ENCODE measurements at regions of chr1 and their contacts with region 1.

Region 1: DNA sequence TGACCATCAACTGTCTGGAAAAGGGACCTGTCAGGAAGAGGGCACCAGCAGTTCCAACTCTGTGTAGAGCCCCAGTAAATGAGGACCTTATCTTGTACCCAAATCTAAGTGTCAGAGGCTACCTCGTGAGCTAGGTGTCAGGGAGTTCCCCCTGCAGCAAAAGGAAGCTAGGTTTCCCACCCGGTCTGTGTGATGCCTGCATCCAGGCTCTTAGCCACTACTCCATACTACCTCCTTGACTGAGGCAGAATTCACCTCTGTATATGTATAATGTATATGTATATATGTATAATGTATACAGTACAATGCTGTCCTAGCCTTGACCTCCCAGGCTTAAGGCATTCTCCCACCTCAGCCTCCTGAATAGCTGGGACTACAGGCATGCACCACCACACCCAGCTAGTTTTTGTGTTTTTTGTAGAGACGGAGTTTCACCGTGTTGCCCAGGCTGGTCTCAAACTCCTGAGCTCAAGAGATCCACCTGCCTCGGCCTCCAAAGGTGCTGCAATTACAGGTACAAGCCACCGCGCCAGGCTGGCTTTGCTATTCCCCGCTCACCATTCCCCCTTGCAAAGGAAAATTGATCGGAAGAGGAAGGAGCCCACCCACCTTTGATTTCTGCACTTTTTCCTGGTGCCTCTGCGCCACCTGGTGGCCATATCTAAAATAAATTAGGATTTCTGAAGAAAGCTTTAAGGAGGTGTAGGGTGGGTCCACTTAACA is 15.7 kb upstream of the LUZP1 start:
- DNase-seq: no peak
- H3K4me3 ChIP-seq: no peak overlapping the region
- CTCF ChIP-seq: peak in 1 of 3 donors; percentile 78
- POLR2A ChIP-seq: no peak

Region 2: DNA sequence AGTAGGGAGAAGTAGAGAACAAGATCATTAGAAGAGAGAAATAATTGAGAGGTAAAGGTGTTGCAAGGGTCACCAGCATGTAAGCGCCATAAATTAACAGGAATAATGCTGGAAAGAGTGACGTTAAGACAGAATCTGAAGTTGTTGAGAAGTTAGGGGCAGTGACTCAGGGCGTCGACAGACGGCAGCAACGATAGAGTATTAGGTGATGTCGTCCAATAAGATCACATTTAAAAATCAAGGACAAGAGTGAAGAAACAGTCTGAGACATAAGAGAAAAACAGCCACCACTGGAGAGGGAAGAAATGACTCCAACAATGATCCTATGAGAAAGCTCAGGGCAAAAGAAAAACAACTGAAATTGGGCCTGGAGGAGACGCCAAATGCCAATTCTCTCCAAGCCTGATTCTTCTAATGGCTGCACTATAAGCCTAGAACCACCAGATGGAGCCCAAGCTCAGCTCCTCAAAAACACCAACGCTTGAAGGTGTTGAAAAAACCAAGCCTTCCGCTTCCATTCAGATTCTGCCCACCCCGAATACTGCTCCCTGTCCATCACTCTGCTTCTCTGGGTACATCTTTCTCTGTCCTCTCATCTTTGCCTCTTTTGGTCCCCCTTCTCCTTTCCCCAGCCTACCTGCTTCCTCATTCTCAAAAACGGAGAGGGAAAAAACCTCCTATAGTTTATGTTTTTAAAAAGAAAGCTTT is 85.8 kb before region 1 on chr1:
- intact Hi-C with region 1: loop called (anchors 5 kb)
- DNase-seq: peak in 1 of 2 donors; percentile 64
- H3K4me3 ChIP-seq: no peak overlapping the region
- CTCF ChIP-seq: peak in 2 of 3 donors; percentile 37 to 91
- POLR2A ChIP-seq: no peak

Measured in lower leg skin (tissue), 4 donors.